ENCODE measurements at regions of chr19 and their contacts with region 1.

Region 1: DNA sequence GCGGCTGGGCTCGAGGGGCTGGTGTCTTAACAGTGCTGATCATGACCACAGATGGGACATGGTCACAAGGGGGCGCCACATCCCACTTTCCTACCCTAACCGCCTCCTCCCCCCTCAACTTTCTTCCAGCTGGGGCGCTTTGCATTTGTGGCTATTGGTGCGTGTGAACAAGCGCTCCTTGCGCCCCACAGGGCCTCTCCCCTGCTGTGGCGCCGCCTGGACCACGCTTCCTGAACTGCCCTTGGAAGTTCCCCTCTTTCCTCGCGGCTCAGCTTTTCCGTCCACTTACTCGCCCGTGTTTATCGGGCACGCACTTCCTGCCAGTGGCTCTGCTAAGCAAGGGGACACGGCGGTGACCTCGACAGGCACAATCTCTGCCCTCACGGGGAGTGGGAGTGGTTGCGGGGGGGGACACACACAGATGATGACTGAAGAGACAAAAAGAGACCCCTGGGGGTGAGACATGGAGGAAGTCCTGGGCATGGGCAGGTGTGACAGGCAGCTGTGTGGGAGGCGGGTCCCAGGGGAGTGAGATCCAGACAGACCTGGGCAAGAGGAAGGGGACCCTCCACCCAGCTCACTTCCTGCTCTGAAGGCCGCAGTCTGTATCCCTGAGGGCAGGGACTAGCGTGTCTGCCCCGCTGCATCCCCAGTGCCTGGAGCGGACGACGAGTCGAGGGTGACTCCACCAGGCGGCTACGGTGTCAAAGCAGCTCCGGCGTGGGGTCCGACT is 40.3 kb downstream of the ZNF787 start:
- DNase-seq: peak; percentile 73
- H3K4me3 Mint-ChIP-seq: peak overlapping the region; percentile 55
- H3K27ac Mint-ChIP-seq: peak overlapping the region; percentile 67
- H3K4me1 Mint-ChIP-seq: peaks cover 9% of the 10 kb centered on the region
- H3K27me3 Mint-ChIP-seq: no peaks in the 10 kb centered on the region
- CTCF ChIP-seq: peak; percentile 41

Region 2: DNA sequence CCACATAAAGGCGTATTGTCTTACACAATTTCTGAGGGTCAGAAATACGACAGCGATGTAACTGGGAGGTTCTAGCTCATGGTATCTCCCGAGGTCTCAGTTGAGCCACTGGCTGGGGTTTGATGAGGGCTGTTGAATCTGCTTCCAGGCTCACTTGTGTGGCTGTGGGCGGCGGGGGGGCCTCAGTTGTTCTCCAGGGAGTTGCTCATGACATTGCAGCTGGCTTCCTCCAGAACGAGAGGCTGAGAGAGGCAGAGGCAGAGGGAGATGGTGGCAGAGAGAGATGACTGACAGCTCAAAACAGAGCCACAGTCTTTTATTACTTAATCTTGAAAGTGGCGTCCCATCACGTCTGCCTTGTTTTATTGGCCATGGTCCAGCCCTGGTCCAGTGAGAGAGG is 100.4 kb before region 1 on chr19:
- CTCF ChIA-PET with region 1: no interaction called
- POLR2A ChIA-PET with region 1: no interaction called
- intact Hi-C with region 1: no loop called
- DNase-seq: no peak
- H3K4me3 Mint-ChIP-seq: no peak overlapping the region
- H3K27ac Mint-ChIP-seq: no peak overlapping the region
- H3K4me1 Mint-ChIP-seq: no peaks in the 10 kb centered on the region
- H3K27me3 Mint-ChIP-seq: no peaks in the 10 kb centered on the region
- CTCF ChIP-seq: no peak

Region 3: DNA sequence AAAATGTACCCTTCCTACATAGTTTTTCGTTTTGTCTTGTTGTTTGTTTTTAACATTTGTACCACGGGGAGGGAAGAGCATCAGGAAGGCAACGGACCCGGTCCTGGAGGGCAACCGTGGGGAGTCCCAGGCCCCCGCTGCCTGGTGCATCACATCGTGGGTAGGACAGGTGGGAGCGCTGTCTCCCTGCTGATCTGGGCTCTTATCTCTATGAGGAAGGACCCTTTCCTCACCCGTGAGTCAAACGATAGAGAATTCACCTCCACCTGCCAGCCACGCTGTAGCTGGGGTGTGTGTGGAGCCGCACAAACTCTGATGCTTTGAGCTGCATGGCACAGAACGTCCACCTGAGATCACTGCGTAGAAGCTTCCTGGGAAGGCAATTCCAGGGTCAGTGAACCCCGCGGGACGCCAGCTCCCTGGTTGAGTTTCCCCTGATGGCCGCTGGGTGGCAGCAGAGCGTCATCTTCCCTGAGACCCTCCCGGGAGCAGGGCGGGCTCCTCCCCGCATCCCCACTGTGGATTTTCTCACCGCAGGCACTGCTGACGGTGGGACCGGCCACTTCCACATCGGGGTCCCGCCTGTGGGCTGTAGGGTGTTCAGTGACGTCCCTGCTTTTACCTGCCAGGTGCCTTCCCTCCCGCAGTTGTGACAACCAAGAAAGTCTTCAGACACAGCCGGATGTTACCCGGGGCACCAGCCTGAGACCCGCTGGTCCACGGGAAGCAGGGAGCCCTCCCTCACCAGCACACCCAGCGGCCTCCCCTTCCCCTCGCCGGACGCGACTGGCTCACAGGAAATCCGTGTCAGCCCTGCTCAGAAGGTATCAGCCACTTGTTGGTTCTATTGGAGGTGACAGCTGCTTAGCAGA is 14.4 kb before region 1 on chr19:
- CTCF ChIA-PET with region 1: interaction called, 68 read pairs
- POLR2A ChIA-PET with region 1: interaction called, 5 read pairs
- intact Hi-C with region 1: no loop called
- DNase-seq: peak; percentile 59
- H3K4me3 Mint-ChIP-seq: no peak overlapping the region
- H3K27ac Mint-ChIP-seq: no peak overlapping the region
- H3K4me1 Mint-ChIP-seq: peaks cover 8% of the 10 kb centered on the region
- H3K27me3 Mint-ChIP-seq: no peaks in the 10 kb centered on the region
- CTCF ChIP-seq: peak; percentile 94

Region 4: DNA sequence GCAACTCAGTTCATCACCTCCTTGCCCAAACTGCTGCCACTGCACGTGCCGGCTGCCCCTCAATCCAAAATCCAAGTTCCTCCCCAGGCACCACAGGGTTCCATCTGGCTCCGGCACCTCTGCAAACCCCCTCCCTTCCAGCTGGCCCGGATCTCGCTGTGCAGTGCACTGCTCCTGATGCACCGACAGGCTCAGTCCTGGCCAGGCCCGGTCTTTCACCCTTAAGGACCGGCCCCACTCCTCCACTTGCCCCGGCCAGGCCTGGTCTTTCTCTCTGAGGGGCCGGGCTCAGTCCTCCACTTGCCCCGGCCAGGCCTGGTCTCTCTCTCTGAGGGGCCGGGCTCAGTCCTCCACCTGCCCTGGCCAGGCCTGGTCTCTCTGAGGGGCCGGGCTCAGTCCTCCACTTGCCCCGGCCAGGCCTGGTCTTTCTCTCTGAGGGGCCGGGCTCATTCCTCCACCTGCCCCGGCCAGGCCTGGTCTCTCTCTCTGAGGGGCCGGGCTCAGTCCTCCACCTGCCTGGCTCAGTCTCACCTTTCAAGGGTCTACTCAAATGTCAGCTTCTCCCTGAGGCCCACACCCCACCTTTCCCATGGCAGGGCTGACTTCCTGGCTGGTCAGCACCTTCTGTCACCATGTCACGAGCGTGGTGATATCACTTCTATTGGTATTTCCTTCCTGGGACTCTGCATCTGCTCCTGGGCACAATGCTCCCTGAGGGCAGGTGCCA is 33.4 kb after region 1 on chr19:
- CTCF ChIA-PET with region 1: no interaction called
- POLR2A ChIA-PET with region 1: no interaction called
- intact Hi-C with region 1: no loop called
- DNase-seq: no peak
- H3K4me3 Mint-ChIP-seq: no peak overlapping the region
- H3K27ac Mint-ChIP-seq: no peak overlapping the region
- H3K4me1 Mint-ChIP-seq: peaks cover 25% of the 10 kb centered on the region
- H3K27me3 Mint-ChIP-seq: no peaks in the 10 kb centered on the region
- CTCF ChIP-seq: no peak

Region 5: GRCh38 chr19:56170261-56170660 is 89.4 kb after region 1 on chr19:
- CTCF ChIA-PET with region 1: interaction called, 18 read pairs
- POLR2A ChIA-PET with region 1: interaction called, 3 read pairs
- intact Hi-C with region 1: loop called (anchors 1 kb)
- DNase-seq: peak; percentile 93
- H3K4me3 Mint-ChIP-seq: peak overlapping the region; percentile 0
- H3K27ac Mint-ChIP-seq: no peak overlapping the region
- H3K4me1 Mint-ChIP-seq: peaks cover 7% of the 10 kb centered on the region
- H3K27me3 Mint-ChIP-seq: no peaks in the 10 kb centered on the region
- CTCF ChIP-seq: no peak

Region 6: DNA sequence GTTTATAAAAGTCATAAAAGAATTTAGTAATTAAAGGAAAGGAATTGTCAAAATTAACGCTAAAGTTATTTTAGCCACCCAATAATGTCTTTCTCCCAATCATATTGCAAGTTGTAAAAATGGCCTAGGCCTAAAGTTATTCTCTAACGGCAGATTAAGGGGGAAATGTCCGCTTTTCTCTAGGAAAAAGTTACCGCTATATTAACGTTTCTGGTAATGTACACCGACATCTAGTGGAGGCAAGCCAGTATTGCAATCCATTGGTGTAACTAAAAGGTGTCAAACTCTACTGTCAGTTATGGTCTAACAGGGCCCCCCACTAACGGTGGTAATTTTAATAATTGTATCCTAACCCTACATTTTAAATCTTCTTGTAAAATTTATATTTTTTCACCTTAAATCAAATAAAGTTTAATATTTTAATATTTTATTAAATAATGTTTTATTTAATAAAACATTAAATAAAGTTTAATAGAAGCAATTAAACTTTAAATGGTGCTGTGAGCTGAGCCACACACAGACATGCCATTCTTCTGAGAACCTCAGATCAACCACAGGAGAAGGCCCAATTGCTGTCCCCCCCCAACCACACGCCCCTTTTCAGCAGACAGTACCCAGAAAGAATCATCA is 269.7 kb after region 1 on chr19:
- CTCF ChIA-PET with region 1: interaction called, 10 read pairs
- POLR2A ChIA-PET with region 1: no interaction called
- intact Hi-C with region 1: loop called (anchors 1 kb)
- DNase-seq: peak; percentile 49
- H3K4me3 Mint-ChIP-seq: no peak overlapping the region
- H3K27ac Mint-ChIP-seq: no peak overlapping the region
- H3K4me1 Mint-ChIP-seq: no peaks in the 10 kb centered on the region
- H3K27me3 Mint-ChIP-seq: no peaks in the 10 kb centered on the region
- CTCF ChIP-seq: peak; percentile 79

Measured in MCF 10A (cell line).